IMR-90 (cell line): ENCODE measurements at regions of chr12 and their contacts with region 1.

Region 1: DNA sequence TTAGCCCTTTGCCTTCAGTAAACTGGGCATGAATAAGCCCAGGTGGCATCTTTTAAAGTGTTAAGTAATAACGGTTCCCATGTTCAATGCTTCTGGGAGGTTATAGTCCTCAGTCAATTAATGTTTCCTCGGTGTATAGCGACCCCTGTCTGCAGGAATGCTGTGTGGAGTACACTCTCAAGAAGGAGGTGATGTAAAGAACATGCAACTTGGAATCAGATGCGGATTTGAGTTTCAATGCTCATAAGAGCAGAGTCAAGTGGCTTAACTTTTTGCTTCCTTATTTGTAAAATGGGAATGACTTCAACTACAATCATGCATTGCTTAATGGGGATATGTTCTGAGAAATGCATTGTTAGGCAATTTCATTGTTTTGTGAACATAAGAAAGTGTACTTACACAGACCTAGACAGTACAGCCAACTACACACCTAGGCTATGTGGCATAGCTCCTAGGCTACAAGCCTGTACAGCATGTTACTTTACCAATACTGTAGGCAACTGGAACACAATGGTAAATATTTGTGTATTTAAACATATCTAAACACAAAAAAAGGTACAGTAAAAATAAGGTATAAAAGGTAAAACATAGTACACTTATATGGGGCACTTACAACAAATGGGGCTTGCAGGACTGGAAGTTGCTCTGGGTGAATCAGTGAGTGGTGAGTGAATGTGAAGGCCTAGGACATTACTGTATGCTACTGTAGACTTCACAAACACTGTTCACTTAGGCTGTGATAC is 6.8 kb upstream of the MRPS35 start:
- DNase-seq: peak; percentile 89
- ATAC-seq: peak; percentile 96
- H3K4me3 ChIP-seq: no peak overlapping the region
- H3K27ac ChIP-seq: no peak overlapping the region
- H3K4me1 ChIP-seq: no peaks in the 10 kb centered on the region
- H3K27me3 ChIP-seq: no peaks in the 10 kb centered on the region
- CTCF ChIP-seq: peak; percentile 85
- POLR2A ChIP-seq: no peak
- RAD21 ChIP-seq: peak; percentile 73

Region 2: DNA sequence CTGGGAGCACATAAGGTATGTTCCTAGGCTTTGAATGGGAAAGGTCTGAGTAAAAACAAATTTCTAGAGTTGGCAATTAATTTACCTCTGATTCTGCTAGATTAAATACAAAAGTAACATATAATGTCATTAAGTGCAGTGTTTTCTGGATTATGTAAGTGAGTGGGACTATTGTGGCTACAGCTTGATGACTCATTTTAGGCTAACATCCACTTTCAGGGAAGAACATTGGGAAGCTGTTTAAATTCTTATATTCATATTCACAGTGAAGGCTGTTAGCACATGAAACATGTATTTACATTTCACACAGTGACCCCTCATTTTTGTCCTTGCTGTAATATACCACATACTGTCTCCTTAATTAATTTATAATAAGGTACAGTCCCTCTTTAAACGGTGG is 384.5 kb before region 1 on chr12:
- CTCF ChIA-PET with region 1: no interaction called
- POLR2A ChIA-PET with region 1: no interaction called
- dilution Hi-C with region 1: no loop called
- in situ Hi-C with region 1: no loop called
- intact Hi-C with region 1: loop called (anchors 2 kb)
- DNase-seq: peak; percentile 89
- ATAC-seq: peak; percentile 80
- H3K4me3 ChIP-seq: no peak overlapping the region
- H3K27ac ChIP-seq: no peak overlapping the region
- H3K4me1 ChIP-seq: peaks cover 7% of the 10 kb centered on the region
- H3K27me3 ChIP-seq: no peaks in the 10 kb centered on the region
- CTCF ChIP-seq: no peak
- POLR2A ChIP-seq: no peak
- RAD21 ChIP-seq: no peak; the same call in 1 of the 2 replicates

Region 3: DNA sequence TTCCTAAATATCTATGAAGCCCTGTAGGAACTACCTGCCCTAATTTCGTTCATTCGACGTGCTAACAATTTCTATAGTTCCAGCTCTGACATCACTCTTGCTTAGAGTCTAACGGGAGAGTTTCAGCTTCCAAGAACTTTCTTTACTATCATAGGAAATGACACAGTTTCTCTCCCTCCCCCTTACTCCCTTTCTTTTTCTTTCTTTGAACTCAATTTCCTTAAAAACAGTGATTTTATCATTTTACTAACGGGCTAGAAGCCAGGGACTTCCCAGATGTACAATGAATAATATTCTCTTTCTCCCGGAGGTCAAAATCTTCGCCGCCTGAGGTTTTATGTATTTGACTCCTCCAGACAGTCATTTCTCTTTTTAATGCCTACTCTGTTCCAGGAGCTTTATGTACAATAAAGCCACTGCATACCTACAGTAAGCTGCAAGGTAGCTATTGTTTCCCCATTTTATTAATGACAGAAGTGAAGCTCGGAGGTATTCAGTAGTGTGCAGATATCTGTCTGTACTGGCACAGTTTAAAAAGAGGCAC is 241.7 kb before region 1 on chr12:
- CTCF ChIA-PET with region 1: no interaction called
- POLR2A ChIA-PET with region 1: no interaction called
- dilution Hi-C with region 1: no loop called
- in situ Hi-C with region 1: no loop called
- intact Hi-C with region 1: no loop called
- DNase-seq: peak; percentile 87
- ATAC-seq: peak; percentile 66
- H3K4me3 ChIP-seq: no peak overlapping the region
- H3K27ac ChIP-seq: no peak overlapping the region
- H3K4me1 ChIP-seq: peaks cover 2% of the 10 kb centered on the region; the same call in 1 of the 2 replicates
- H3K27me3 ChIP-seq: no peaks in the 10 kb centered on the region
- CTCF ChIP-seq: no peak
- POLR2A ChIP-seq: no peak
- RAD21 ChIP-seq: no peak

Region 4: DNA sequence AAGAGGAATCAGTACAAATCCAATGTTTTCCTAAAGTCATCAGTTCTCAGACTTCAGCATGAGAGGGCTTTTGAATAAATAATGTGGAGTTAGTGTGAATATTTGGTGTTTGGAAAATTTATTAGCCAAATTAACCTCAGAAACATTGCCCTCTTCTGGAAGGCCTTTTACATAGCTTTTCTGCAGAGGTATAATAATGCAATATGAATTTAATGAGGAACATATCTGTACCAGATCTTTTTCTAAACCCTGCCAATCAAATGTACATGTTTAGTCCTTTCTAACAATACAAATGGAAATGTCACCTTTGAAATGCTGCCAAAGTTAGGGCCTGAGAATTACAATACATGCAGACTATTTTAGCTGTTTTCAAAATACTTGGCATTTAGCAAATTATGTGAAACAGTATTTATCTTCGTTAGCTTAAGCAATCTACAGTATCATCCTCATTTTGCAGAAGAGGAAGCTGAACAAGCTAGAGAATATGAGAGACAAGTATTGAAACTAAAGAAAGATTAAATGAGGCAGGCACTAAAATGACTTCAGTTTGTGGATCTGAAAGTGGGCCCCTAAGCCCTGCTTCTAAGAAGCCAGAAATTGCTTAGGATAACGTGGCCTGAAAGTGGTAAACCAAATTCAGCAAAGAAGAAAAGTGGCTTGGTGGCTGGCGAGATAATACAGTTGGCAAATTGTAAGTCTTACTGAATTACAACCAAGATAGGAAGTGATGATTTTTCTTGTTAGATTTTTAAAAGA is 136.5 kb after region 1 on chr12:
- CTCF ChIA-PET with region 1: no interaction called
- POLR2A ChIA-PET with region 1: no interaction called
- dilution Hi-C with region 1: no loop called
- in situ Hi-C with region 1: no loop called
- intact Hi-C with region 1: no loop called
- DNase-seq: no peak
- ATAC-seq: 0 out of 2 replicates have a peak, but pooled peaks have one; percentile 30
- H3K4me3 ChIP-seq: no peak overlapping the region
- H3K27ac ChIP-seq: no peak overlapping the region
- H3K4me1 ChIP-seq: peaks cover 6% of the 10 kb centered on the region; the same call in 1 of the 2 replicates
- H3K27me3 ChIP-seq: no peaks in the 10 kb centered on the region
- CTCF ChIP-seq: peak; percentile 58
- POLR2A ChIP-seq: no peak
- RAD21 ChIP-seq: peak; percentile 33; the same call in 1 of the 2 replicates